Sigmoid colon (tissue), 7 donors: ENCODE measurements at regions of chr1 and their contacts with region 1.

Region 1: DNA sequence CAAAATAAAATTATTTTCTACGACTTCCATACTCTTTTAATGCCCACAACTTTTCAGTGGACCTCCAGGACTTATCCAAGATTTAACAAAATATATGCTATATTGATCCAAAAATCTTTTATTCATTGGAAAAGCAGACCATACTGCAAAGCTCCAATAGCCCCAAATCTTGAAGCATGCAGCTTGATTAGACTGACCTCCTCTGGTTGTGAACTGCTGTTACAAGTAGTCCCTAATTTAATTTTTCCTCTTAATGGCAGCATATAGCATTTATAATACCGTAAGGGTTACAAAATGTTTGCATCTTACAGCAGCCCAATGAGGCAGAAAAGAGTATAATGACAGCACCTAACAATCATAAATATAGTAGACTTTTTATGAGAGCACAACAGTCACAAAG is 49.8 kb downstream of the TPR start:
- DNase-seq: no peak
- H3K4me3 ChIP-seq: no peak overlapping the region
- H3K27ac ChIP-seq: no peak overlapping the region
- H3K4me1 ChIP-seq: no peaks in the 10 kb centered on the region
- H3K27me3 ChIP-seq: no peaks in the 10 kb centered on the region
- CTCF ChIP-seq: no peak
- EP300 ChIP-seq: no peak
- POLR2A ChIP-seq: no peak

Region 2: GRCh38 chr1:186363891-186364290 is 38.7 kb after region 1 on chr1:
- intact Hi-C with region 1: loop called (anchors 5 kb)
- DNase-seq: no peak
- H3K4me3 ChIP-seq: no peak overlapping the region
- H3K27ac ChIP-seq: no peak overlapping the region
- H3K4me1 ChIP-seq: no peaks in the 10 kb centered on the region
- H3K27me3 ChIP-seq: no peaks in the 10 kb centered on the region
- CTCF ChIP-seq: no peak
- EP300 ChIP-seq: no peak
- POLR2A ChIP-seq: no peak

Region 3: DNA sequence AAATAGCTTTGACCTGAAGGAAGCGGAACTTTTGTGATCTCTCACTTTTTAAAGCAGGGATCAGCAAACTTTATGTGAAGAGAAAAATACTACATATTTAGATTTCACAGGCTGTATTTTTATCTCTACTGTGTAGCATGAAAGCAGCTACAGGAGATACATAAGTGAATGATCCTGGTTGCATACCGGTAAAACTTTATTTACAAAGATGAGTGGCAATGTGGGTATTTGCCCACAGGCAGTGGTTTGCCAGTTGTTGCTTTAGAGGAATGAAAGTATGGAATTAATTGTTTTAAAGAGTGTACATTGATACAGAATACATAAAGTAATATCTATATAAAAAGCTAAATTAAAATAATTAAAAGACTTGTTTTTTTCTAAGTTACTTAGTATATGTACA is 68.2 kb after region 1 on chr1:
- intact Hi-C with region 1: loop called (anchors 10 kb)
- DNase-seq: no peak
- H3K4me3 ChIP-seq: no peak overlapping the region
- H3K27ac ChIP-seq: no peak overlapping the region
- H3K4me1 ChIP-seq: no peaks in the 10 kb centered on the region
- H3K27me3 ChIP-seq: no peaks in the 10 kb centered on the region
- CTCF ChIP-seq: no peak
- EP300 ChIP-seq: no peak
- POLR2A ChIP-seq: no peak

Region 4: GRCh38 chr1:187157552-187157951 is 832.3 kb after region 1 on chr1:
- intact Hi-C with region 1: no loop called
- DNase-seq: no peak
- H3K4me3 ChIP-seq: no peak overlapping the region
- H3K27ac ChIP-seq: no peak overlapping the region
- H3K4me1 ChIP-seq: no peaks in the 10 kb centered on the region
- H3K27me3 ChIP-seq: no peaks in the 10 kb centered on the region
- CTCF ChIP-seq: no peak
- EP300 ChIP-seq: no peak
- POLR2A ChIP-seq: no peak